GM23248 (cell line): ENCODE measurements at regions of chr1 and their contacts with region 1.

Region 1: DNA sequence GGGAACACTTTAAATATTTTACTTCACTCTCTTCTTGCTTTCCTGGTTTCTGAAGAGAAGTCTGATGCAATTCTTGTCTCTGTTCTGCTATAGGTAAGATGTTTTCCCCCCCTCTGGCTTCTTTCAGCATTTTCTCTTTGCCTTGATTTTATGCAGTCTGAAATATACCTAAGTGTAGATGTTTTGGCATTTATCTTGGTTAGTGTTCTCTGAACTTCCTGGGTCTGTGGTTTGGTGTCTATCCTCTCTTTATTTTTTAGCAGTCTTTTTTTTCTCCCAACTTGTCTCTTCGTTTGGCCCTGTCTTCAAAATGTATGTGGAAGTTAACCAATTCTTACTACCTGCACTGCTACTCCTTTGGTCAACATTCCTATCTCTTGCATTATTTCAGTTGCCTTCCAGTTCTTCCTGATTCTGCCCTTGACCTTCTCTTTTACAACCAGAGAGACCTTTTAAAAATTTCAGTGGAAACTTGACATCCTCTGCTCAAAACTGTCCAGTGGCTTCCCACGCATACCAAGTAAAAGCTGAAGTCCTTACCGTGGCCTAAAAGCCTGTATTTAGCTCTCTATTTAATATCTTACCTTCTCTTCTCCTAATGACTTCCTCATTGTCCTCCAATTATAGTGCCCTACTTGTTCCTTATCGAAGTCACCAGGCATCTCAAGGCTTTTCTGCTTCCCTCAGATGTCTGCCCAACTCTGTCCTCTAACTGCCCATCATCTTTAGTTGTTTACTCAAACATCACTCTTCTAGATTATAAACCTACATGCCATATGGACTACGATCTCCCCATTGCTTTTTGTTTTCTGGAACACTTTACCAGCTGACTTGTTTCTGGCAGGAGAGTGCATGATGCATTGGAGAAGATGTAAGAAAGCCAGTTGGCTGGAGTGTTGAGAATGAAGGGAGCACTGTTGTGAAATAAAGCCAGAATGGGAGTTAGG is 40.9 kb downstream of the RAP1A start:
- DNase-seq: peak; percentile 61
- H3K4me3 ChIP-seq: no peak overlapping the region
- H3K27ac ChIP-seq: no peak overlapping the region
- H3K4me1 ChIP-seq: peaks cover 30% of the 10 kb centered on the region
- H3K27me3 ChIP-seq: no peaks in the 10 kb centered on the region

Region 2: GRCh38 chr1:111489604-111490003 is 170.9 kb before region 1 on chr1:
- in situ Hi-C with region 1: loop called (anchors 10 kb)
- DNase-seq: no peak
- H3K4me3 ChIP-seq: no peak overlapping the region
- H3K27ac ChIP-seq: no peak overlapping the region
- H3K4me1 ChIP-seq: no peaks in the 10 kb centered on the region
- H3K27me3 ChIP-seq: peaks cover 10% of the 10 kb centered on the region; the same call in 1 of the 2 replicates